CD8-positive, alpha-beta memory T cell (primary cell): ENCODE measurements at regions of chr12 and their contacts with region 1.

Region 1: GRCh38 chr12:56724972-56725722 is at the start of gene NACA:
- DNase-seq: peak; percentile 96 to 98 (median 97)
- H3K4me3 ChIP-seq: peak within 1 kb of the TSS; percentile 96
- H3K4me3 Mint-ChIP-seq: peak within 1 kb of the TSS; percentile 89 to 99 (median 98)
- H3K27ac ChIP-seq: peak within 1 kb of the TSS; percentile 79
- H3K27ac Mint-ChIP-seq: peak within 1 kb of the TSS; percentile 85 to 98 (median 96)
- H3K4me1 ChIP-seq: peaks cover 49% of the 10 kb centered on the region
- H3K4me1 Mint-ChIP-seq: peaks cover 56 to 58% (median 57%) of the 10 kb centered on the region in 3 donors
- H3K27me3 ChIP-seq: no peaks in the 10 kb centered on the region
- H3K27me3 Mint-ChIP-seq: no peaks in the 10 kb centered on the region
- total RNA-seq, gene NACA: 957 to 1,017 TPM

Region 2: GRCh38 chr12:56630160-56630632 is 95.0 kb before region 1 on chr12 and contains the start of gene BAZ2A:
- CTCF ChIA-PET with region 1: interaction called, 5 read pairs
- POLR2A ChIA-PET with region 1: interaction called, 17 read pairs
- DNase-seq: peak; percentile 71 to 86 (median 80)
- H3K4me3 ChIP-seq: peak within 1 kb of the TSS; percentile 89
- H3K4me3 Mint-ChIP-seq: peak within 1 kb of the TSS; percentile 82 to 94 (median 91)
- H3K27ac ChIP-seq: peak within 1 kb of the TSS; percentile 80
- H3K27ac Mint-ChIP-seq: peak within 1 kb of the TSS; percentile 92 to 98 (median 95)
- H3K4me1 ChIP-seq: peaks cover 67% of the 10 kb centered on the region
- H3K4me1 Mint-ChIP-seq: peaks cover 72 to 76% (median 75%) of the 10 kb centered on the region in 3 donors
- H3K27me3 ChIP-seq: no peaks in the 10 kb centered on the region
- H3K27me3 Mint-ChIP-seq: peaks cover 0 to 2% of the 10 kb centered on the region in 2 donors
- total RNA-seq, gene BAZ2A: 87.3 to 89.1 TPM

Region 3: DNA sequence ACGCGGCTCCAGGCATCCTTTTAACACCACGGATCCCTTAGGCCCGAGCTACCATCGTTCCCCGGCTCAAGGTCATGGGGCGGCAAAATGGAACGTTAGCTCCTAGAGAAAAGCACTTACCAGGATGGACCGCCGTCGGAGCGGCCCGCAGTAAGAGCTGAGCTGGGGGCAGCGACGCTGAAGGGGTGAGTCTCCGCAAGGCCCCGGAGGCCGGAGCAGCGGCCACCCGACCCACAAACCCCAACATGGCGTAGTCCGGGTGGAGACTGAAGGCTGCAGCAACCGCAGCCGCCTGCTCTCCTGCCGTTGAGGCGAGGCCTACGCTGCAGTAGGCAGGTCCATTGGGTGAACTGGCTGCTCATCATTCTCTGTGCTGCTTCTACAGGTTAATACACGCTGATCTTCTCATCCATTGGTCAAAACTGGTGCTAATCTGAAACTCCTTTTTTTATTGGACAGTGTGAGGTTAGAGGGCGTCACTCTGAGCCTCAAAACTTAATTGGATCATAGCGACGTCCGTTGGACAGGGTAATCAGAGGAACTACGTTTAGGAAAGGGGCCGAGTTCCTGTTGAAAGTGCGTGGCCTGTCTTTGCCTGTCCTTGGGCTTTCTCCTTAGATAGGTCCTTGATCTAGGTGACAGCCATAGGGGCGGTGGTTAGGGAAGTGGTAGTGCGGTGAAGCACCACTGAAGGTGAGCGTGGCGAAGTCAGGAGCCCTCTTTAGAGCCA is 79.3 kb before region 1 on chr12 and contains the start of gene ATP5F1B:
- CTCF ChIA-PET with region 1: no interaction called
- POLR2A ChIA-PET with region 1: interaction called, 20 read pairs
- DNase-seq: peak; percentile 85 to 96 (median 94)
- H3K4me3 ChIP-seq: peak within 1 kb of the TSS; percentile 100
- H3K4me3 Mint-ChIP-seq: peak within 1 kb of the TSS; percentile 79 to 99 (median 93)
- H3K27ac ChIP-seq: peak within 1 kb of the TSS; percentile 98
- H3K27ac Mint-ChIP-seq: peak within 1 kb of the TSS; percentile 76 to 100 (median 98)
- H3K4me1 ChIP-seq: peaks cover 23% of the 10 kb centered on the region
- H3K4me1 Mint-ChIP-seq: peaks cover 28 to 39% (median 39%) of the 10 kb centered on the region in 3 donors
- H3K27me3 ChIP-seq: no peaks in the 10 kb centered on the region
- H3K27me3 Mint-ChIP-seq: no peaks in the 10 kb centered on the region
- total RNA-seq, gene ATP5F1B: 925 to 960 TPM

Region 4: GRCh38 chr12:56677680-56678079 is 47.5 kb before region 1 on chr12:
- CTCF ChIA-PET with region 1: no interaction called
- POLR2A ChIA-PET with region 1: interaction called, 11 read pairs
- DNase-seq: no peak
- H3K4me3 ChIP-seq: no peak overlapping the region
- H3K4me3 Mint-ChIP-seq: peak overlapping the region in 4 of 7 donors; percentile 3 to 33 (median 25)
- H3K27ac ChIP-seq: peak overlapping the region; percentile 24
- H3K27ac Mint-ChIP-seq: peak overlapping the region; percentile 54 to 96 (median 66)
- H3K4me1 ChIP-seq: peaks cover 65% of the 10 kb centered on the region
- H3K4me1 Mint-ChIP-seq: peaks cover 57 to 83% (median 72%) of the 10 kb centered on the region in 3 donors
- H3K27me3 ChIP-seq: no peaks in the 10 kb centered on the region
- H3K27me3 Mint-ChIP-seq: no peaks in the 10 kb centered on the region

Region 5: GRCh38 chr12:56699020-56699661 is 26.0 kb before region 1 on chr12:
- CTCF ChIA-PET with region 1: no interaction called
- POLR2A ChIA-PET with region 1: no interaction called
- DNase-seq: no peak
- H3K4me3 ChIP-seq: no peak overlapping the region
- H3K4me3 Mint-ChIP-seq: no peak overlapping the region
- H3K27ac ChIP-seq: no peak overlapping the region
- H3K27ac Mint-ChIP-seq: no peak overlapping the region
- H3K4me1 ChIP-seq: no peaks in the 10 kb centered on the region
- H3K4me1 Mint-ChIP-seq: peaks cover 0 to 2% (median 2%) of the 10 kb centered on the region in 3 donors
- H3K27me3 ChIP-seq: no peaks in the 10 kb centered on the region
- H3K27me3 Mint-ChIP-seq: peaks cover 0 to 3% of the 10 kb centered on the region in 2 donors